H1 (cell line): ENCODE measurements at regions of chr19 and their contacts with region 1.

Region 1: GRCh38 chr19:34336781-34337271 is 28.2 kb upstream of the GPI start:
- DNase-seq: no peak
- H3K4me3 ChIP-seq: no peak overlapping the region
- H3K27ac ChIP-seq: no peak overlapping the region
- H3K4me1 ChIP-seq: no peaks in the 10 kb centered on the region
- H3K27me3 ChIP-seq: no peaks in the 10 kb centered on the region
- CTCF ChIP-seq: peak in 2 of 3 experiments; percentile 34 to 41; a peak in 2 of 4 replicates
- EP300 ChIP-seq: no peak
- POLR2A ChIP-seq: no peak
- RAD21 ChIP-seq: peak; percentile 38 to 58

Region 2: GRCh38 chr19:34165295-34165738 is 171.5 kb before region 1 on chr19:
- CTCF ChIA-PET with region 1: no interaction called
- POLR2A ChIA-PET with region 1: no interaction called
- DNase-seq: no peak
- H3K4me3 ChIP-seq: no peak overlapping the region
- H3K27ac ChIP-seq: no peak overlapping the region
- H3K4me1 ChIP-seq: no peaks in the 10 kb centered on the region
- H3K27me3 ChIP-seq: no peaks in the 10 kb centered on the region
- CTCF ChIP-seq: no peak
- EP300 ChIP-seq: no peak
- POLR2A ChIP-seq: no peak
- RAD21 ChIP-seq: no peak

Region 3: GRCh38 chr19:34241513-34242337 is 95.1 kb before region 1 on chr19:
- CTCF ChIA-PET with region 1: interaction called, 15 read pairs
- POLR2A ChIA-PET with region 1: no interaction called
- DNase-seq: peak; percentile 77 to 83
- H3K4me3 ChIP-seq: no peak overlapping the region
- H3K27ac ChIP-seq: no peak overlapping the region
- H3K4me1 ChIP-seq: peaks cover 0 to 3% (median 0%) of the 10 kb centered on the region in 4 experiments; a peak in 2 of 7 replicates
- H3K27me3 ChIP-seq: no peaks in the 10 kb centered on the region
- CTCF ChIP-seq: peak; percentile 87 to 97 (median 95)
- EP300 ChIP-seq: no peak
- POLR2A ChIP-seq: no peak
- RAD21 ChIP-seq: peak; percentile 79 to 81

Region 4: GRCh38 chr19:34260771-34261173 is 76.1 kb before region 1 on chr19:
- CTCF ChIA-PET with region 1: interaction called, 11 read pairs
- POLR2A ChIA-PET with region 1: no interaction called
- DNase-seq: no peak
- H3K4me3 ChIP-seq: no peak overlapping the region
- H3K27ac ChIP-seq: no peak overlapping the region
- H3K4me1 ChIP-seq: peaks cover 6 to 19% (median 11%) of the 10 kb centered on the region in 4 experiments
- H3K27me3 ChIP-seq: no peaks in the 10 kb centered on the region
- CTCF ChIP-seq: no peak
- EP300 ChIP-seq: no peak
- POLR2A ChIP-seq: no peak
- RAD21 ChIP-seq: no peak